ENCODE measurements at regions of chr19 and their contacts with region 1.

Region 1: DNA sequence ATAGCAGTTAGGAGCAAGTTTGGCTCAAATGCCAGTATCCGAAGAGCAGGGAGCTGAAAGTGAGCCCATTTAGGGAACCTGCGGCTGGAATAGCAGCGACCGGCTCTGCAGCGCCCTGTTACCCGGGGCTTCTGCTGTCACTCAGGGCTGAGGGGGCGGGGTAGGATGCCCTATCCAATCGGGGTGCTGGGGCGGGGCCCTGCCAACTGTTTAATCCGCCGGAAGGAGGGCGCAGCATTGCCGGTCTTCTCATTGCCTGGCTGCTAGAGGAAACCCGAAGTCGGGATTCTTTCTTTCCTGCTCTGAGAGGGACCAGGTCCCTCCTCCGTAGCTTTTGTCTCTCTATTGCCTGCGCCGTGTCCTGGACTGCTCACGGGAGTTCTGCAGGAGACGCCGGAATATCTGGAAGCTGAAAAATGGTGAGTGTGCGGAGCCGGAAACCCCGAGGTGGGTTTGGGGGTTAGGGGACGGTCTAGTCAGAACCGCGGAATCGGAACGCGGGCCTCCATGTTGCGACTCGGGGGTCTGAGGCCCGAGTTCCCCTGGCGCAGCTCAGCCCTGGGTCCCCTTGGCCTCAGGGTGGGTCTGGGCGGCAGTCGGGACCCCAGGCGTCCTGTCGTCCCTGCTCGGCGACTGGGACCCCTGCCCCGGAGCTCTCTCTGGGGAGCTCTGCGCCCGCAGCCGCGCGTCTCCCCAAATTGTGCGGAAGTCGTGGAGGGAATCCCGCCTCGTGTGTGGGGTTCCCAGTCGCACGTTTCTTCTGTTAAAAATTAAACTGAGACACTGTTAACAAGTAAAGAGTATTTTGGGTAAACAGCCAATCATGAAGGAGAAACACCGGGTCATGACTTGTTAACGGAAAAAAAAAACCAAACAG is 22.8 kb downstream of the ZNF763 start:
- DNase-seq: peak; percentile 99

Region 2: DNA sequence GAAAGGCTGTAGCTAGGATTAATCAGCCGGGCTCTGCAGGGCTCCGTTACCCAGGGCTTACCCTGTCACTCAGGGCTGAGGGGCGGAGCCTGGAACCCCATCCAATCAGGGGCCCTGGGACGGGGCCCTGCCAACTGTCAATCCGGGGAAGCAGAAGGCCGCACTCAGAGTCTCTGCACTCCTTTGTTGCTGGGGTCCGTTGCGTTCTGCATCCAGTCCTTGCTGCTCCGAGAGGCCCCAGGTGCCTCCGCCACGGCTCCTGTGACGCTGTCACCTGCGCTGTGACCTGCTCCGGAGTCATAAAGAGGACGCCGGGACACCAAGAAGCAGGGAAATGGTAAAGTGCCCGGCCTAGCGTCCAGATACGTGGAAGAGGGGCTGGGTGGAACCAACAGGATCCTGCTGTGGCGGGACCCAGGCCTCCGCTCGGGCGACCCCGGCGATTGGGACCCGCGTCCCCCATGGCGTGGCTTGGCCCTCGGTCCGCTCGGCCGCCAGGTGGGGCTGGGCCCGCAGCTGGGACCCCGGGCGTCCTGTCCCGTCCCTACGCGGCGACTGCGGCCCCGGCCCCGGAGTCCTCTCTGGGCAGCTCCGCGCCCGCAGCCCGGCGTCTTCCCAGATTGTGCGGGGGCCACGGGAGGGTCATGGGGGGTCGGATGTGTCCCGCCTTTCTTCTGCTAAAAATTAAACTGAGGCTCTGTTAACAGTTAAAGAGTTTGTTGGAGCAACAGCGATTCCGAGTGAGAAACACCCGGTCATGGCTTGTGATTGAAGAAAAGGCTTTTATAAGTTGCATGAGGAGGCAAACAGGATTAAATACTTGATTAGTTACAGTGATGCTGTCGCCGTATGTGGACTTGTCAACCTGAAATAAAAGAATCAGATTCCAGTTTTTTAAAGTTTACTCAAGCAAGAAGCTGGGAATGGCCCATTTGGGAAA is 189.0 kb before region 1 on chr19 and contains the start of gene ZNF491:
- intact Hi-C with region 1: loop called (anchors 5 kb)
- DNase-seq: peak; percentile 96
- total RNA-seq, gene ZNF491: 1.8 TPM

Region 3: DNA sequence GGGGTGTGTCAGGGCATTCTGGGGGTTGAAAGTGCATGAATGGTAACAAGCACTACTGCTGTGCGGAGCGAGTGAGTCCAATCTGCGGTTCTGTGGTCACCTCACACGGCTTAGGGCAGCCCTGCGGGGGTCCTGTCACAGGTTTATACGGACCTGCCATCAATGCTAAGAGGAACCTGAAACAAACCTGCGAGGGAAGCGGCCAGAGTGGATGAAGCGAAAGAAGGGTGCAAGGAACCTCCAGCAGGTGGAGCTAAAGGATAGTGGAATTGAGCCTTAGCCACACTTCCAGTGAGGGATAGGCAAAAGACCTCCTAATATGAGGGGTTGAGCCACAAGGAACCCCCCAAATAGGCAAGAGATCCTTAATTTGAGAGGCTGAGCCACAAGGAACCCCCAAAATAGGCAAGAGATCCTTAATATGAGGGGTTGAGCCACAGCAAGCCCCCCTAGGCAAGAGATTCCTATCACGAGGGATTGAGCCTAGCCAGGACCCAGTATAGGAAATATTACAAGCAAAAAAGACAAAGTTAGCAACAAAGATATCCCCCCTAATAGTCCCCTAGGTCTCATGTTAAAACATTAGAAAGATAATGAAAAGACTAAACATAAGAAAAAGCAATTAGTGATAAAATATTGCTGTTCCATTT is 106.4 kb before region 1 on chr19:
- intact Hi-C with region 1: loop called (anchors 2 kb)
- DNase-seq: peak; percentile 75

Region 4: DNA sequence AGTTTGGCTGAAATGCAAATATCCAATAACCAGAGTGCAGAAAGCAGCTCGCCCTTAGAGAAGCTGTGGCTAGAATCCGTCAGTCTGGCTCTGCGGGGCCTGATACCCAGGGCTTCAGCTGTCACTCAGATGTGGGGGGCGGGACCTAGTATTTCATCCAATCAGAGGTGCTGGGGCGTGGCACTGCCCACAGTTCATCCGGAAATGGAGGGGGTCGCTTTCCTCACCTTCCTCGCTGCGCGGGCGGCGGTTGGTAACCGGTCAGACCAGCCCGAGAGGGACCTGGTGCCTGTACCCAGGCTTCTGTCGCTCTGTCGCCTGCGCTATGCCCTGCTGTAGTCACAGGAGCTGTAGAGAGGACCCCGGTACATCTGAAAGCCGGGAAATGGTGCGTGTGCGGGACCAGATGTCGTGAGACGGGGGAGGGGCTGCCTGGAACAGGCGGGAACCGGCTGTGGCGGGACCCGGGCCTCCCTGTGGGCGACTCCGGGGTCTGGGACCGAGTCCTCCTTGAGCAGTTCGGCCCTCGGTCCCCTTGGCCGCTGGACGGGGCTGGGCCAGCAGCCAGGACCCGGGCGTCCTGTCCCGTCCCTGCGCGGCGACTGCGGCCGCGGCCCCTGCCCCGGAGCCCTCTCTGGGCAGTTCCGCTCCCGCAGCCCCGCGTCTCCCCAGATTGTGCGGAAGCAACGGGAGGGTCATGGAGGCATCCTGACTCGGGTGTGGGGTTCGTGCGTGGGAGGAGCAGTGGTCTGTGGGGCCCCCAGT is 62.6 kb before region 1 on chr19 and contains the start of gene ZNF700:
- intact Hi-C with region 1: loop called (anchors 1 kb)
- DNase-seq: peak; percentile 96
- total RNA-seq, gene ZNF700: 5.1 TPM

Region 5: DNA sequence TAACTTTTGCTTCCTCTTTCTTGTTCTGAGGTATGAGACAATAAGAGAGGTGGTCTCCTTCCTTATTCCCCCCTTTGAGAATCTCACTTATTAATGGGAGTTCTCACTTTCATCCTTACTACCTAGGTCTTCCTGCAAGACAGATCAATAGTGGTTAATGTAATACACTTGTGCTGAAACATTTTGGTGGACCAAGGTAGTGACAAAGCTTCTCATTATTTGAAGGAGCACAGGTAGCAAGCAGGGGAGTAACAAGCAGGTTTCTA is 44.9 kb before region 1 on chr19:
- intact Hi-C with region 1: no loop called
- DNase-seq: no peak

Region 6: GRCh38 chr19:11964858-11965645 is 22.6 kb before region 1 on chr19 and contains the start of gene ZNF763:
- intact Hi-C with region 1: loop called (anchors 1 kb)
- DNase-seq: peak; percentile 97
- total RNA-seq, gene ZNF763: 3.1 TPM

Measured in cardiac septum (tissue), 1 donor.